ENCODE measurements at regions of chr7 and their contacts with region 1.

Region 1: GRCh38 chr7:121126801-121127534 is 138.5 kb downstream of the CPED1 start:
- DNase-seq: no peak
- H3K4me3 ChIP-seq: no peak overlapping the region
- H3K27ac ChIP-seq: no peak overlapping the region
- H3K4me1 ChIP-seq: no peaks in the 10 kb centered on the region
- H3K27me3 ChIP-seq: no peaks in the 10 kb centered on the region
- CTCF ChIP-seq: peak; percentile 37

Region 2: DNA sequence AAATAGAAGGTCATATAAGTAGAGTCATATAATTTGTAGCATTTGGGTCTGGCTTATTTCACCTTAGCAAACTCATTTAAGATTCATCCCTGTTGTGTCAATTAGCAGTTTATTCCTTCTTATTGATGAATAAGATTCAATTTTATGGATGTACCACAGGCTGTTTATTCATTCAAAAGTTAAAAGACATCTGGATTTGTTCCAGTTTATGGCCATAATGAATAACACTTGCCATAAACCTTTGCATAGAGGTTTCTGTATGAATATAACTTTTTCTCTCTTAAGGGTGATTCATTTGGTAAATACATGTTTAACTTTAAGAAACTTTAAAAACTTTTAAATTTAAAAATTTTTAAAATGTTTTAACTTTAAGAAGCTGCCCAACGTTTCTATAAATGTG is 72.0 kb before region 1 on chr7:
- CTCF ChIA-PET with region 1: no interaction called
- dilution Hi-C with region 1: no loop called
- in situ Hi-C with region 1: no loop called
- intact Hi-C with region 1: no loop called
- DNase-seq: no peak
- H3K4me3 ChIP-seq: no peak overlapping the region
- H3K27ac ChIP-seq: no peak overlapping the region
- H3K4me1 ChIP-seq: no peaks in the 10 kb centered on the region
- H3K27me3 ChIP-seq: no peaks in the 10 kb centered on the region
- CTCF ChIP-seq: no peak

Region 3: GRCh38 chr7:121097577-121097976 is 29.4 kb before region 1 on chr7:
- CTCF ChIA-PET with region 1: no interaction called
- dilution Hi-C with region 1: no loop called
- in situ Hi-C with region 1: no loop called
- intact Hi-C with region 1: no loop called
- DNase-seq: no peak
- H3K4me3 ChIP-seq: no peak overlapping the region
- H3K27ac ChIP-seq: no peak overlapping the region
- H3K4me1 ChIP-seq: peaks cover 6% of the 10 kb centered on the region
- H3K27me3 ChIP-seq: no peaks in the 10 kb centered on the region
- CTCF ChIP-seq: no peak

Region 4: GRCh38 chr7:121337398-121337797 is 210.4 kb after region 1 on chr7:
- CTCF ChIA-PET with region 1: no interaction called
- dilution Hi-C with region 1: no loop called
- in situ Hi-C with region 1: loop called (anchors 25 kb)
- intact Hi-C with region 1: loop called (anchors 2 kb)
- DNase-seq: no peak
- H3K4me3 ChIP-seq: no peak overlapping the region
- H3K27ac ChIP-seq: no peak overlapping the region
- H3K4me1 ChIP-seq: no peaks in the 10 kb centered on the region
- H3K27me3 ChIP-seq: no peaks in the 10 kb centered on the region
- CTCF ChIP-seq: no peak

Region 5: DNA sequence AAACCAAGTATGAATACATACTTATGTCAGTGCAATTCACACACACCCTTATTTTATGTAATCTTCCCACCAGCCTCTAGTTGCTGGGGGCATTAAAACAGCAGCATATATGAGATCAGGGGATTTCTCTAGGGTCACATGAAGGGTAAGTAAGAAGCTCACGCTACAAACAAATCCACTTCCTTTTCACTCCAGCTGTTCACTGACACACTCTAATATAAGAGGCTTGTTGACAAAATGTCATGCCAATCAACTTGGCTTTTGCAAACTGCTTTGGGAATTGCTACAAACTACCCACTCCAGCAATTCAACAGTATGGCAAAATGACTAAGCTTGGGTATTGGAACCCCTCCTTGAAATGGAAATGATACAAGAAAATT is 258.8 kb after region 1 on chr7:
- CTCF ChIA-PET with region 1: no interaction called
- dilution Hi-C with region 1: no loop called
- in situ Hi-C with region 1: no loop called
- intact Hi-C with region 1: no loop called
- DNase-seq: peak; percentile 9
- H3K4me3 ChIP-seq: no peak overlapping the region
- H3K27ac ChIP-seq: no peak overlapping the region
- H3K4me1 ChIP-seq: no peaks in the 10 kb centered on the region
- H3K27me3 ChIP-seq: no peaks in the 10 kb centered on the region
- CTCF ChIP-seq: no peak